ENCODE measurements at regions of chr1 and their contacts with region 1.

Region 1: GRCh38 chr1:40951943-40952743 is 27.4 kb upstream of the CTPS1 start:
- DNase-seq: peak; percentile 85
- H3K4me3 ChIP-seq: no peak overlapping the region
- H3K27ac ChIP-seq: no peak overlapping the region
- H3K4me1 ChIP-seq: peaks cover 5 to 9% of the 10 kb centered on the region in 2 experiments; a peak in 1 of 4 replicates
- H3K27me3 ChIP-seq: no peaks in the 10 kb centered on the region
- CTCF ChIP-seq: peak; percentile 93
- EP300 ChIP-seq: no peak
- RAD21 ChIP-seq: peak; percentile 91

Region 2: DNA sequence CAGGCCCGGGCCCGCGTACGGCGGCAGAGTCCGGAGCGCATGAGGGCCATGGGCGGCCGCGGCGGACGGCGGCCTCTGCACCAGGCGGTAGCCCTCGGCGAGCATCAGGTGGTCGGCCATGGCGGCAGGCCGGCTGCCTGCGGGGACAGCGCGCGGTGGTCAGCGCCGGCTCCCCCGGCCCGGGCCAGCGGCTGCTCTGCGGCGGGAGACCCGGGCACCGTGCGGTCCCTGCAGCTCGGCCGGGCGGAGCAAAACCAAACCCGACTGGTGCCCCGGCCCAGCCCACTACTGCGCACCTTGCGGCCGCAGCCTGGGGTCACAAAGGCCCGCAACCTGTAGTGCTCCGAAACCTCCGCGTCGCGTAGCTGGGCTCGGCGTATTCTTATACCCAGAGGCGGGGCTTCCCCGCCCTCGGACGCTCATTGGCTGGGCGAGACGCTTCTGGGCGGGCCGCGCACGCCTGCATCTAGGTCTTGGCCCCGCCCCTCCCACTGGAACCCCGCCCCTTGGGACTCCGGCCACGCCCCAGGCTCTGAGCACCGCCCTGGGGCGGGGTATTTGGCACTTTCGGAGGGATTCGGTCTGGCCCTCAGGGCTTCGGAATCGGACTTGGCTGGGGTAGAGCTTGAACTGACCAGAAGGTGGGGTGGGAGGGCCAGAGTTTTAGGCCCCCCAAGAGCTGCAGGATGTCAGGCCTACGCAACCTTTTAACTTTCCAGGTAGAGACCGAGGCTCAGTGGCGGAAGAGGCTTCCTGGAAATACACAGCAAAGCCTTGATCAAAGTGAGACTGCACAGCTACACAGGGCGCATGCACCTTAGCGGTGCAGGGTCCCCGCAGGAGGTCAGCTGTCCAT is 89.9 kb before region 1 on chr1 and contains the start of gene CITED4:
- CTCF ChIA-PET with region 1: interaction called, 339 read pairs
- POLR2A ChIA-PET with region 1: interaction called, 6 read pairs
- DNase-seq: peak; percentile 98
- H3K4me3 ChIP-seq: peak within 1 kb of the TSS; percentile 62 to 68
- H3K27ac ChIP-seq: no peak within 1 kb of the TSS; a peak in 1 of 4 replicates
- H3K4me1 ChIP-seq: peaks cover 0 to 11% of the 10 kb centered on the region in 2 experiments; a peak in 2 of 4 replicates
- H3K27me3 ChIP-seq: no peaks in the 10 kb centered on the region
- CTCF ChIP-seq: peak; percentile 32; the same call in 1 of the 2 replicates
- EP300 ChIP-seq: no peak
- RAD21 ChIP-seq: peak; percentile 43
- polyA plus RNA-seq, gene CITED4: 5.9 and 10.1 TPM in 2 replicates

Region 3: DNA sequence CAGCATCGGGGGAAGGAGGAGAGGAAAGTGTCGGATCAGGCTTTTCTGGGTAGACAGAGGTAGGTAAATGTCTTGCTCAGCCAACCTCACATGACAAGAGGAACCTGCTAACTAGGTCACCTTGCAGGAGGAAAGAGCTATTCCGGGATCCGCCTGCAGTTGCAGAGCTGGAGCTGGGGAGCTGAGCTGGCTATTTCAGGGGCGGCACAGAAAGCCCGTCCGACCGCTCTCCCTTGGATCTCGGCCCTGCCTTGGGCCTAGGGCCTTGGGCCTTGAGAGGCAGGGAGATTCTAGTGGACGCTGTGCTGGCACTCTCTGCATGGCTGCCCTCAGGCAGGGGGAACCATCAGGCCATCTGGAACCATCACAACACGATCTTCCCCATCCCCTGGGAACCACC is 29.2 kb before region 1 on chr1:
- CTCF ChIA-PET with region 1: interaction called, 13 read pairs
- POLR2A ChIA-PET with region 1: no interaction called
- DNase-seq: no peak
- H3K4me3 ChIP-seq: no peak overlapping the region
- H3K27ac ChIP-seq: no peak overlapping the region
- H3K4me1 ChIP-seq: peaks cover 0 to 3% of the 10 kb centered on the region in 2 experiments; a peak in 1 of 4 replicates
- H3K27me3 ChIP-seq: no peaks in the 10 kb centered on the region
- CTCF ChIP-seq: no peak
- EP300 ChIP-seq: no peak
- RAD21 ChIP-seq: no peak

Region 4: DNA sequence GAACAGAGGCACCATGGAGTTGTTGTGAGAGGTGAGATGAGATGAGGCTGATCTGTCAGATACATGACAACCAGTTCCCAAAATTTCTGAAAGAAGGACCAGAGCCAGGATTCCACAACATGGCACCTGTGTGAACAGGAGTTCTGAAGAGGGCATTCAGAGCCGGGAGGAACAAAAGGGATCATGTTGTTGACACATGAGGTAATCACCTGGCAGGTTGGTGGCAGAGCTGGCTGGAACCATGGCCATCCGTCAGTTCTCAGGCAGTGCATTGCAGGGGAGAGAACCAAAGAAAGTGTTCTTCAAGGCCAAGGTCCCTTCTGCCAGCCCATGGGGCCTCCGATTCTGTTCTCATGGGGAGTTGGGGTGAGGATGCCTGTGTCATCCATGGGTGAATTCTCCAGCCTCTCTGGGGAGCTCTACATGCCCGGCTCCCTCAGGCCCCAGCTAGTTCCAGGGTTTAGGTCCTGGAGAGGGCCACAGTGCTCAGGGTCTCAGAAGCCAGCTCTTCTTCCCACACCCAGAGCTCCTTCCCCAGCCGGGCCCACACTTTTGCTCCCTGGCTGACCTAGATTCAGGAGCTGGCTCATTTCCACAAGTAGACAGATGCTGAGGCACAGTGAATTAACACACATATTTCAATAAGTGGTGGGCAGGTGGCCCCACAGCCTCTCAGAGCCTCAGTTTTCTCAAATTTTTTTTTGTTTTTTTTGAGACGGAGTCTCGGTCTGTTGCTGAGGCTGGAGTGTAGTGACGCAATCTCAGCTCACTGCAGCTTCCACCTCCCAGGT is 21.8 kb before region 1 on chr1:
- CTCF ChIA-PET with region 1: interaction called, 25 read pairs
- POLR2A ChIA-PET with region 1: no interaction called
- DNase-seq: no peak
- H3K4me3 ChIP-seq: no peak overlapping the region
- H3K27ac ChIP-seq: no peak overlapping the region
- H3K4me1 ChIP-seq: no peaks in the 10 kb centered on the region
- H3K27me3 ChIP-seq: no peaks in the 10 kb centered on the region
- CTCF ChIP-seq: no peak
- EP300 ChIP-seq: no peak
- RAD21 ChIP-seq: no peak

Region 5: GRCh38 chr1:40939320-40940059 is 12.7 kb before region 1 on chr1:
- CTCF ChIA-PET with region 1: interaction called, 25 read pairs
- POLR2A ChIA-PET with region 1: interaction called, 4 read pairs
- DNase-seq: no peak
- H3K4me3 ChIP-seq: no peak overlapping the region
- H3K27ac ChIP-seq: no peak overlapping the region
- H3K4me1 ChIP-seq: no peaks in the 10 kb centered on the region
- H3K27me3 ChIP-seq: no peaks in the 10 kb centered on the region
- CTCF ChIP-seq: no peak
- EP300 ChIP-seq: no peak
- RAD21 ChIP-seq: no peak

Region 6: DNA sequence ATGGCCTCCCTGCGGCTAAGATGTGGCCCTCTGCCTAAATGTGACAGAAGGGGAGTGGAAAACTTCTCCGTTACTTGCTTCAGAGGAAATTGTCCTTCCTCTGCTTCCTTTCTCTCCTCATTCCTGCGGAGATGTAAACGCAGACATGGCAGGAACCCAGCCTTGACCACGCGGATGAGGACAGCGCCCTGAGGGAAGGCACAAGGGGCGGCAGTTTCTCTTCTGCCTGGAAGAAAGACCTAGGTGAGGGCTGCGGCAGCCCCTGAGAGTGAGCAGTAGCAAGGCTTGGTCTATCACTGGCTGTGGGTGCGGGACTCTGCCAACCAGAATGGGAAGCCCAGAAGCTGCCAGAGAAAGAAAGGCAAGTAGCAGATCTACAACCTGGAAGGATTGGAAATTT is 13.4 kb after region 1 on chr1:
- CTCF ChIA-PET with region 1: interaction called, 44 read pairs
- POLR2A ChIA-PET with region 1: no interaction called
- DNase-seq: no peak
- H3K4me3 ChIP-seq: no peak overlapping the region
- H3K27ac ChIP-seq: no peak overlapping the region
- H3K4me1 ChIP-seq: 0 out of 4 replicates have a peak, but pooled peaks cover 0 to 4% of the 10 kb centered on the region in 2 experiments
- H3K27me3 ChIP-seq: no peaks in the 10 kb centered on the region
- CTCF ChIP-seq: no peak
- EP300 ChIP-seq: no peak
- RAD21 ChIP-seq: no peak

Region 7: DNA sequence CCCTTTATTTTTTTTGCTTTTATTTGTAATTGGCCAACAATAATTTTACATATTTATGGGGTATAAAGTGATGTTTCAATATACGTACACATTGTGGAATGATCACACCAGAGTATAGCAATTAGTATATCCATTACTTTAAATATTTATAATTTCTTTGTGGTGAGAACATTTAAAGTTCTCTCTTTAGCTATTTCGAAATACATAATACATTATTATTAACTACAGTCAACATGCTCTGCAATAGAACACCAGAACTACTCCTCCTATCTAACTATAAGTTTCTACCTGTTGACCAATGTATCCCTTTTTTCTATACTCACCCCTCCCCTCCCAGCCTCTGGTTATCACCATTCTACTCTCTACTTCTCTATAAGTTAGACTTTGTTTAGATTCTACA is 212.6 kb after region 1 on chr1:
- CTCF ChIA-PET with region 1: no interaction called
- POLR2A ChIA-PET with region 1: no interaction called
- DNase-seq: no peak
- H3K4me3 ChIP-seq: no peak overlapping the region
- H3K27ac ChIP-seq: no peak overlapping the region
- H3K4me1 ChIP-seq: no peaks in the 10 kb centered on the region; a peak in 2 of 4 replicates
- H3K27me3 ChIP-seq: no peaks in the 10 kb centered on the region
- CTCF ChIP-seq: no peak
- EP300 ChIP-seq: no peak
- RAD21 ChIP-seq: no peak

Region 8: DNA sequence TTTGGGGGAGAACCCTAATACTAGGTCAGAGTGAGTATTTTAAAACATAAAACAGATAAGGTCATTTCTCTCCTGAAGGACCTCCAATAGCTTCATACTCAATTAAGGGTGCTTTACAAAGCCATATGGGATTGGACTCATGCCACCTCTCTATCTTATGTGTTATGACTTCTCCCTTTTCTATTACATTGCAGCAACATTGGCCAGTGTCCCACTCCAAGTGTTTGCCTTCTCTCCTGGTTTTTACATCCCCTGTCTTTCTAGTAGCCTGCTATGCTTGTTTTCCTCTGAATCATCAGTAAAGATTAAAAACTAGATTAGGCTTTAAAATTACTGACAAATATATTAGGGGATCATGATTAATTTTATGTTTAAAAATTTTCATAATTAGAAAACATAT is 223.4 kb after region 1 on chr1:
- CTCF ChIA-PET with region 1: no interaction called
- POLR2A ChIA-PET with region 1: no interaction called
- DNase-seq: no peak
- H3K4me3 ChIP-seq: no peak overlapping the region
- H3K27ac ChIP-seq: no peak overlapping the region
- H3K4me1 ChIP-seq: no peaks in the 10 kb centered on the region
- H3K27me3 ChIP-seq: no peaks in the 10 kb centered on the region
- CTCF ChIP-seq: no peak
- EP300 ChIP-seq: no peak
- RAD21 ChIP-seq: no peak